ENCODE measurements at regions of chr15 and their contacts with region 1.

Region 1: GRCh38 chr15:72220678-72221077 is 10.3 kb downstream of the PKM start:
- DNase-seq: no peak
- H3K4me3 ChIP-seq: no peak overlapping the region
- H3K27ac ChIP-seq: peak overlapping the region in 1 of 2 donors; percentile 35
- H3K4me1 ChIP-seq: peaks cover 0 to 7% of the 10 kb centered on the region in 2 donors
- H3K27me3 ChIP-seq: no peaks in the 10 kb centered on the region
- CTCF ChIP-seq: no peak
- POLR2A ChIP-seq: no peak

Region 2: GRCh38 chr15:72168111-72168808 is 52.4 kb before region 1 on chr15:
- intact Hi-C with region 1: no loop called
- DNase-seq: peak in 1 of 2 donors; percentile 76
- H3K4me3 ChIP-seq: peak overlapping the region in 2 of 3 donors; percentile 20 to 56
- H3K27ac ChIP-seq: peak overlapping the region; percentile 89 to 95
- H3K4me1 ChIP-seq: peaks cover 4% of the 10 kb centered on the region in 2 donors
- H3K27me3 ChIP-seq: no peaks in the 10 kb centered on the region
- CTCF ChIP-seq: no peak
- POLR2A ChIP-seq: no peak

Region 3: GRCh38 chr15:72249142-72249810 is 28.6 kb after region 1 on chr15:
- intact Hi-C with region 1: loop called (anchors 2 kb)
- DNase-seq: no peak
- H3K4me3 ChIP-seq: no peak overlapping the region
- H3K27ac ChIP-seq: no peak overlapping the region
- H3K4me1 ChIP-seq: no peaks in the 10 kb centered on the region
- H3K27me3 ChIP-seq: no peaks in the 10 kb centered on the region
- CTCF ChIP-seq: no peak
- POLR2A ChIP-seq: no peak